ENCODE measurements at regions of chr2 and their contacts with region 1.

Region 1: DNA sequence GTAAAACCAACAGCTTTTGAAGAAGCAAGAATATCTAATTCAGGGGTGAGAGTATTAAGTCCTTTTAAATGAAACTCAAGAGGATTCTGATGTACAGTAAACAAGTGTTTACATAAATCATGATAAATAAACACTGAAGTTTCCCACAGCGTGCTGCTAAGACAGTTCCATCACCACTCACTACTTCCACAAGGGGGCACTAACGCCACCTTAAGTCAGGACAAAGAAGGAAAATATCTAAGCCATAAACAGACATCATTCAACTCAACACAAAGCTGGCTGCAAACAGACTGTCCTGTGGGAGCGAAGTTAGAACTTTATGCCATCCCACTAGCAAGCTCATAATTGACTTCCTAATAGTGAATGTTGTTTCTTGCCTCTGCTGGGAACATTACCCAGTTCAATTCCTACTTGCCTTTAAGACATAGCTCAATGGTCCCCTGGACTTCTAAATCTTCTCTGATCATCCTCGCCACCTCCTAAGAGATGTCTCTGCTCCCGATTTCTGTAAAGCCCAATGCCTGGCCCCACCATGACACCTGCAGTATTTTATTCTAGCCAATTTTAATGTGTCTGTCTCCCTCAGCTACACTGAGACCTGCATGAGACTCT is 36.5 kb downstream of the MRPL44 start:
- DNase-seq: peak; percentile 83
- ATAC-seq: peak; percentile 82
- H3K4me3 Mint-ChIP-seq: no peak overlapping the region
- H3K27ac Mint-ChIP-seq: peak overlapping the region; percentile 18
- H3K4me1 Mint-ChIP-seq: peaks cover 15% of the 10 kb centered on the region
- H3K27me3 Mint-ChIP-seq: no peaks in the 10 kb centered on the region
- CTCF ChIP-seq: peak; percentile 82

Region 2: DNA sequence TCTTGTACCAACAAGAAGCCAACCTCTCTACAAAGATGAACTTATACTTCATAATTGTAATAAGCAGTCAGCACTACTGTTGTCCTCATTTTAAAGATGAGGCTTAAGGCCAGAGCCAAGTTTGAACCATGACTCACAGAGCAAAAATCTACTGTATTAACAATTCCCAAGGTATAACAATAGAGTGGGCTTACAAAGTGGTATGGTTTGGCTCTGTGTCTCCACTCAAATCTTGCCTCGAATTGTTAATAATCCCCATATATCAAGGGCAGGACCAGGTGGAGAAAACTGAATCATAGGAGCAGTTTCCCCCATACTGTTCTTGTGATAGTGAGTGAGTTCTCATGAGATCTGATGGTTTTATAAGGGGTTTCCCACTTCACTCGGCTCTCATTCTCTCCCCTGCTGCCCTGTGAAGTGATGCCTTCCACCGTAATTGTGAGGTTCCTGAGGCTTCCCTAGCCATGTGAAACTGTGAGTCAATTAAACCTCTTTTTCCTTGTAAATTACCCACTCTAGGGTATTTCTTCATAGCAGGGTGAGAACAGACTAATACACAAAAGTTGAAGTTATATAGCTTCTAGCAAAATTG is 17.0 kb before region 1 on chr2:
- CTCF ChIA-PET with region 1: interaction called, 93 read pairs
- POLR2A ChIA-PET with region 1: interaction called, 3 read pairs
- intact Hi-C with region 1: no loop called
- DNase-seq: no peak
- ATAC-seq: no peak
- H3K4me3 Mint-ChIP-seq: no peak overlapping the region
- H3K27ac Mint-ChIP-seq: no peak overlapping the region
- H3K4me1 Mint-ChIP-seq: no peaks in the 10 kb centered on the region
- H3K27me3 Mint-ChIP-seq: no peaks in the 10 kb centered on the region
- CTCF ChIP-seq: no peak

Region 3: GRCh38 chr2:224039124-224039940 is 45.6 kb after region 1 on chr2 and contains the start of gene SERPINE2:
- CTCF ChIA-PET with region 1: interaction called, 21 read pairs
- POLR2A ChIA-PET with region 1: interaction called, 3 read pairs
- intact Hi-C with region 1: no loop called
- DNase-seq: peak; percentile 75
- ATAC-seq: peak; percentile 80
- H3K4me3 Mint-ChIP-seq: peak within 1 kb of the TSS; percentile 89
- H3K27ac Mint-ChIP-seq: peak within 1 kb of the TSS; percentile 35
- H3K4me1 Mint-ChIP-seq: peaks cover 17% of the 10 kb centered on the region
- H3K27me3 Mint-ChIP-seq: peaks cover 43% of the 10 kb centered on the region
- CTCF ChIP-seq: no peak
- total RNA-seq, gene SERPINE2: 40.4 to 42.4 TPM

Region 4: DNA sequence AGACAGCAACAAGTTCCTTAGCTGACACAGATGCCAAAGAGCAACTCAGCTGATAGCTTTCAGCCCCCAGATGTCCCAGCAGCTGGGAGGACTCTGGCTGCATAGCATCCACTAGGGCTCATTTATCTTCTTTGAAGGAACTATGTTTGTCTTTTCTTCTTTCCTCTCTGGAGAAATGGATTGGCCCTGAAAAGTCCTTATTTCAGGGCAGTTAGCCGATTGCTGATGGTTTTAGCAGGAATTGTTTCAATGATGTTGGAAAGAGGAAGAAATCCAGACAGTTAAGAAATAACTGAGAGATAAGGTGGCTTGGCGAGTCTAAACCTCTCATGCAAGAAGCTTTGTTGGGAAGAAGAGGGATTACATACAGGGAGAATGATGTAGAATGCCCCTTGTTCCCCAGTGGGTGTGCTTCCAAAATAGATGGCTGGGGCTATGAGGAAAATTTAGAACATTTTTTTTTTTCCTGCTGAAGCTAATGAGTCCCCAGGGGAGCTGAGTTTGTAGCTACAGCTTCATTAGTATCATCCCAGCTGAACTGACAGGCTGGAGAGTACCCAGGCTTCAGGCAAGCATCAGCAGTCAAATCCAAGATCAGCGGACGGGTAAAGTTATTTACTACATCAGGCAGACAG is 78.9 kb after region 1 on chr2:
- CTCF ChIA-PET with region 1: interaction called, 11 read pairs
- POLR2A ChIA-PET with region 1: no interaction called
- intact Hi-C with region 1: no loop called
- DNase-seq: no peak
- ATAC-seq: no peak
- H3K4me3 Mint-ChIP-seq: no peak overlapping the region
- H3K27ac Mint-ChIP-seq: no peak overlapping the region
- H3K4me1 Mint-ChIP-seq: no peaks in the 10 kb centered on the region
- H3K27me3 Mint-ChIP-seq: no peaks in the 10 kb centered on the region
- CTCF ChIP-seq: no peak

Region 5: GRCh38 chr2:224111576-224111975 is 117.8 kb after region 1 on chr2:
- CTCF ChIA-PET with region 1: no interaction called
- POLR2A ChIA-PET with region 1: no interaction called
- intact Hi-C with region 1: no loop called
- DNase-seq: no peak
- ATAC-seq: no peak
- H3K4me3 Mint-ChIP-seq: no peak overlapping the region
- H3K27ac Mint-ChIP-seq: no peak overlapping the region
- H3K4me1 Mint-ChIP-seq: no peaks in the 10 kb centered on the region
- H3K27me3 Mint-ChIP-seq: peaks cover 5% of the 10 kb centered on the region
- CTCF ChIP-seq: no peak

Region 6: DNA sequence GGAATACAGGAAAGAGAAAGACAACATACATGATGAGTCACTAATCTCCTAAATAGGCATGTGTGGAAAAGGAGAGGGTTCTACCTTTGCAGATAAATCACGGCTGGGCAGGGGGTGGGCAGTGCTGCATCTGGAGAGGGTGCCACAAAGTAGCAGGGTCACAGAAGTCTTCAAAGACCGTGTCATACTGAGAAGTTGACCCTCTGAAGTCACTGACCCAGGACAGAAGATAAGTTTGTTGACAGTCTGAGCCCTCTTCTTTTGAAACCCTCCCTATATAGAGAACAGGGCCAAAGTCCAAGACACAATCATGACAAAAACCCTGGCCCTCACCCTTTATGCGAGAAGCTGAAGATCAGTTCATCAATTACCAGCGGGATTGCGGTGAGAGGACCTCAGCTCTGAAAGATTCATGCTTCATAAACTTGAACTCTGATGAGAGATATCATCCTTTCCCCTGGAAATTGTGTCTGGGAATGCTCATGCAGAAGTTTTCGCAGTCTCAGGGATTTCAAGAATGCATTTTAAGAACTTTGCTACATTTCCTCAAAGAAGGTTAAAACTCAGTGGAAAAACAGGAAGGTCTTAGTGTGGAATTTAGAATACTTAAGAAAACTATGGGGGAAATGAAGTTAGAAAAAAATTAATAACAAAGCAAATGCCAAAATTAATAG is 278.6 kb after region 1 on chr2:
- CTCF ChIA-PET with region 1: interaction called, 14 read pairs
- POLR2A ChIA-PET with region 1: no interaction called
- intact Hi-C with region 1: no loop called
- DNase-seq: no peak
- ATAC-seq: no peak
- H3K4me3 Mint-ChIP-seq: no peak overlapping the region
- H3K27ac Mint-ChIP-seq: no peak overlapping the region
- H3K4me1 Mint-ChIP-seq: no peaks in the 10 kb centered on the region
- H3K27me3 Mint-ChIP-seq: peaks cover 6% of the 10 kb centered on the region
- CTCF ChIP-seq: no peak

Region 7: GRCh38 chr2:224369028-224369632 is 375.4 kb after region 1 on chr2:
- CTCF ChIA-PET with region 1: interaction called, 10 read pairs
- POLR2A ChIA-PET with region 1: no interaction called
- intact Hi-C with region 1: no loop called
- DNase-seq: peak; percentile 26
- ATAC-seq: no peak
- H3K4me3 Mint-ChIP-seq: no peak overlapping the region
- H3K27ac Mint-ChIP-seq: no peak overlapping the region
- H3K4me1 Mint-ChIP-seq: no peaks in the 10 kb centered on the region
- H3K27me3 Mint-ChIP-seq: peaks cover 1% of the 10 kb centered on the region
- CTCF ChIP-seq: peak; percentile 85

Measured in activated CD8-positive, alpha-beta T cell treated with anti-CD3 and anti-CD28 coated beads for 36 hours (primary cell).